ENCODE measurements at regions of chr7 and their contacts with region 1.

Region 1: GRCh38 chr7:34158368-34159155 is 253.2 kb downstream of the BMPER start:
- DNase-seq: no peak
- H3K4me3 ChIP-seq: no peak overlapping the region
- H3K27me3 ChIP-seq: no peaks in the 10 kb centered on the region
- CTCF ChIP-seq: no peak

Region 2: GRCh38 chr7:33886149-33886623 is 272.4 kb before region 1 on chr7:
- CTCF ChIA-PET with region 1: no interaction called
- POLR2A ChIA-PET with region 1: no interaction called
- DNase-seq: no peak
- H3K4me3 ChIP-seq: no peak overlapping the region
- H3K27me3 ChIP-seq: no peaks in the 10 kb centered on the region
- CTCF ChIP-seq: peak; percentile 34

Region 3: GRCh38 chr7:34260279-34260678 is 101.7 kb after region 1 on chr7:
- CTCF ChIA-PET with region 1: no interaction called
- POLR2A ChIA-PET with region 1: interaction called, 14 read pairs
- DNase-seq: peak; percentile 93
- H3K4me3 ChIP-seq: no peak overlapping the region
- H3K27me3 ChIP-seq: no peaks in the 10 kb centered on the region
- CTCF ChIP-seq: no peak

Measured in BJ (cell line).